ENCODE measurements at regions of chr10 and their contacts with region 1.

Region 1: GRCh38 chr10:74988832-74989561 is 122.5 kb upstream of the SAMD8 start:
- DNase-seq: no peak
- H3K4me3 ChIP-seq: no peak overlapping the region
- H3K27ac ChIP-seq: peak overlapping the region; percentile 22 to 63 (median 37)
- H3K4me1 ChIP-seq: peaks cover 9 to 29% (median 15%) of the 10 kb centered on the region in 4 donors
- H3K27me3 ChIP-seq: no peaks in the 10 kb centered on the region
- CTCF ChIP-seq: no peak
- EP300 ChIP-seq: no peak
- POLR2A ChIP-seq: no peak

Region 2: GRCh38 chr10:74826142-74827044 is 162.6 kb before region 1 on chr10 and contains the start of gene KAT6B:
- in situ Hi-C with region 1: no loop called
- intact Hi-C with region 1: loop called (anchors 10 kb)
- DNase-seq: peak; percentile 100
- H3K4me3 ChIP-seq: peak within 1 kb of the TSS; percentile 75 to 93 (median 93)
- H3K27ac ChIP-seq: peak within 1 kb of the TSS; percentile 98 to 99 (median 99)
- H3K4me1 ChIP-seq: peaks cover 13 to 47% (median 34%) of the 10 kb centered on the region in 4 donors
- H3K27me3 ChIP-seq: no peaks in the 10 kb centered on the region
- CTCF ChIP-seq: peak; percentile 19 to 59 (median 23)
- EP300 ChIP-seq: no peak
- POLR2A ChIP-seq: peak; percentile 57
- total RNA-seq, gene KAT6B: 27.3 to 67.0 (median 54.9) TPM

Measured in transverse colon (tissue), 4 donors.